MCF 10A (cell line): ENCODE measurements at regions of chr10 and their contacts with region 1.

Region 1: GRCh38 chr10:79374312-79375191 is 27.3 kb downstream of the PPIF start:
- DNase-seq: peak; percentile 80
- H3K4me3 Mint-ChIP-seq: no peak overlapping the region
- H3K27ac Mint-ChIP-seq: no peak overlapping the region
- H3K4me1 Mint-ChIP-seq: no peaks in the 10 kb centered on the region
- H3K27me3 Mint-ChIP-seq: no peaks in the 10 kb centered on the region
- CTCF ChIP-seq: peak; percentile 94

Region 2: GRCh38 chr10:79178614-79179163 is 195.9 kb before region 1 on chr10:
- CTCF ChIA-PET with region 1: no interaction called
- POLR2A ChIA-PET with region 1: no interaction called
- intact Hi-C with region 1: no loop called
- DNase-seq: no peak
- H3K4me3 Mint-ChIP-seq: no peak overlapping the region
- H3K27ac Mint-ChIP-seq: no peak overlapping the region
- H3K4me1 Mint-ChIP-seq: peaks cover 21% of the 10 kb centered on the region
- H3K27me3 Mint-ChIP-seq: no peaks in the 10 kb centered on the region
- CTCF ChIP-seq: no peak

Region 3: GRCh38 chr10:79237454-79238165 is 136.9 kb before region 1 on chr10:
- CTCF ChIA-PET with region 1: no interaction called
- POLR2A ChIA-PET with region 1: no interaction called
- intact Hi-C with region 1: no loop called
- DNase-seq: peak; percentile 73
- H3K4me3 Mint-ChIP-seq: no peak overlapping the region
- H3K27ac Mint-ChIP-seq: peak overlapping the region; percentile 82
- H3K4me1 Mint-ChIP-seq: peaks cover 58% of the 10 kb centered on the region
- H3K27me3 Mint-ChIP-seq: no peaks in the 10 kb centered on the region
- CTCF ChIP-seq: no peak

Region 4: DNA sequence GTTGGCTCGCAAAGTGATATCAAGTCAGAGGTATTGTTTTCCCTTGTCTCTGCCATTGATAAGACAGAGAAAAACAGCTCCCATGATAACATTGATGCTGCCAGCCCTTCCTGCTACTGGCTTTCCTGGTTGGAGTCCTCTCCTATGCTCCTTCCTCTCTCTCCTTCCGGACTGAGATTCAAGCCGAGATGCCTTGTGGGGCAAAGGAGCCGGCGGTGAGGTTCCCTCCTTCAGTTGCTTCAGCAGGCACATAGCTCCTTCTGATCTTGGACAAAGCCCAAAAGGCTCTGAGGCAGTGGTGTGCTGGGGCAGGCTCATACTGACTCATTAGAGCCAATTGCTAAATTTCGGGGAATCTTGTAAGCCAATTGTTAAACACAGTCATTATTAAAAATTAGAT is 79.7 kb after region 1 on chr10:
- CTCF ChIA-PET with region 1: interaction called, 14 read pairs
- POLR2A ChIA-PET with region 1: no interaction called
- intact Hi-C with region 1: no loop called
- DNase-seq: peak; percentile 96
- H3K4me3 Mint-ChIP-seq: no peak overlapping the region
- H3K27ac Mint-ChIP-seq: no peak overlapping the region
- H3K4me1 Mint-ChIP-seq: peaks cover 11% of the 10 kb centered on the region
- H3K27me3 Mint-ChIP-seq: no peaks in the 10 kb centered on the region
- CTCF ChIP-seq: no peak

Region 5: DNA sequence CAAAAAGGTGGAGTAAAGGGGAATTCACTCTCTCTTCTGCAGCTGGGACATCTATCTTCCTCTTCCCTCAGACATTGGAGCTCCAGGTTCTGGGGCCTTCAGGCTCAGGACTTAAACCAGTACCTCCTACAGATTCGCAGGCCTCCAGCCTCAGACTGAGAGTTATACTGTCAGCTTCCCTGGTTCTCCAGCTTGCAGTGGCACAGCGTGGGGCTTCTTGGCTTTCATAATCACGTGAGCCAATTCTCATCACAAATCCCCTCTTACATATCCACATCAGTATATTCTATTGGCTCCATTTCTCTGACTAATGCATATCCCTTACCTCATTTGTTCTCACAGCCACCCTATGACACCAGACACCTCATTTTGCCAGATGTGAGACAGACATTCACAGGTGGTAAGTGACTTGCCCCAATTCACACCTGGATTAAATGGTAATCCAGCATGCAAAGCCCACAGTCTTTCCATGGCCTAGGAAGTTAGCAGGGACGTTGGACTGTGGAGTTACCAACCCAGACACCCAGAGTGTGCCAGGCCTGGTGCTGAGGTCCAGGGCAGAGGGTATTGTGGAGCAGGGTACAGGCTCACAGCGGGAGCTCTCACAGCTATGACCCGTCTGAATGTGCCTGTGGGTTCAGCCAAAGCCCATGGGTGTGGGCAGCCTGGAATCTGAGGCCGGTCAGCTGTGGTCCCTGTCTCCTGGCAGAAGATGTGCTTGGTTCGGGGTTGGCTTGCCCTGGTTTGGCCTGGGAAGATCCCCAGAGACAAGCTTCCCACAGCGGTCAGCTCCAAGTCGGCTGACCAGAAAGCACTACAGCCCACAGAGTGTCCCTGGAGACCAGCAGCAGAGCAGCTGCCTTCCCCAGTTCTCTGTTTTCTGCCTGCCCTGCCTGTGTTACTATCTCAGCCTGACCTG is 89.3 kb after region 1 on chr10:
- CTCF ChIA-PET with region 1: interaction called, 38 read pairs
- POLR2A ChIA-PET with region 1: interaction called, 3 read pairs
- intact Hi-C with region 1: loop called (anchors 1 kb)
- DNase-seq: no peak
- H3K4me3 Mint-ChIP-seq: no peak overlapping the region
- H3K27ac Mint-ChIP-seq: no peak overlapping the region
- H3K4me1 Mint-ChIP-seq: no peaks in the 10 kb centered on the region
- H3K27me3 Mint-ChIP-seq: no peaks in the 10 kb centered on the region
- CTCF ChIP-seq: no peak

Region 6: DNA sequence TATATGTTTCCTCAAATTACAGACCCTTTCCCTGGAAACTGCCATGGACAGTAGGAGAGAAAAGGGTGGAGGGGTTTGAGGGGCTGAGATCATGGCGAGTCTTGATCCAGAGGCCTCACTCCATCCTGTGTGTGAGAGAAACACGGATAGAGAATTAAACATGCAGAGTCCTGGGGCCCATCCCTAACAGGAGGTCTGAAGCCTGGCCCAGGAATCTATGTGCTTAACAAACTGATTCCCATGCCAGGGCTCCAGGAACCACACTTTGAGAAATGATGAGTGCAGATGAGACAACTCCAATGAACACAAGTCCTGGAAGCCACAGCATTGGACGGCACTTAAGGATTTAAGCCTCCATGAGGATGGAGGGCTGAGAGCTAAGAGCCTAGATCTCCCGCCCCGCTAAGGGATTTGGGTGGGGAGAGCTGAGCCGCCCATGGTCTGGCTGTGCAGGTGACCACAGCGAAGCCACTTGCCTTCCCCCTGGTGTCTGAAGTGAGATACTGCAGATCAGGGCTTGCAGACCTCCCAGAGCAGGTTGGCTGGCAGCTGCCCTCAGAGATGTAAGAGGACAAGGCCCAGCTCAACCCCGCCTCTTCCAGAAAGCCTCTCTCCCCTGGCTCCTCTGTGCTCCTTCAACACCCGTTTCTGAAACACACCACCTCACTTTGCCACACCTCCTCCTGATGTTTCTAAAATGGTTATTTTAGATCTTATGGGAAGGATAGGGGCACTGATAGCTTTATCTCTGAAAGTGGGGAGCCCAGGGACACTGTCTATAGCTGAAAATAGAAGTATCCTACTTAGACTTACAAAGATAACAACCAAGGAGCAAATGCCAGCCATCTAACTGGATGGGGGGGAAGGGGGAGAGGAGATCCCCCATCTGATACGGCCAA is 113.0 kb after region 1 on chr10:
- CTCF ChIA-PET with region 1: interaction called, 11 read pairs
- POLR2A ChIA-PET with region 1: interaction called, 4 read pairs
- intact Hi-C with region 1: no loop called
- DNase-seq: peak; percentile 68
- H3K4me3 Mint-ChIP-seq: no peak overlapping the region
- H3K27ac Mint-ChIP-seq: peak overlapping the region; percentile 80
- H3K4me1 Mint-ChIP-seq: peaks cover 15% of the 10 kb centered on the region
- H3K27me3 Mint-ChIP-seq: no peaks in the 10 kb centered on the region
- CTCF ChIP-seq: peak; percentile 26

Region 7: GRCh38 chr10:79502561-79503309 is 128.2 kb after region 1 on chr10:
- CTCF ChIA-PET with region 1: interaction called, 12 read pairs
- POLR2A ChIA-PET with region 1: no interaction called
- intact Hi-C with region 1: loop called (anchors 5 kb)
- DNase-seq: peak; percentile 32
- H3K4me3 Mint-ChIP-seq: no peak overlapping the region
- H3K27ac Mint-ChIP-seq: no peak overlapping the region
- H3K4me1 Mint-ChIP-seq: peaks cover 6% of the 10 kb centered on the region
- H3K27me3 Mint-ChIP-seq: peaks cover 55% of the 10 kb centered on the region
- CTCF ChIP-seq: peak; percentile 38

Region 8: DNA sequence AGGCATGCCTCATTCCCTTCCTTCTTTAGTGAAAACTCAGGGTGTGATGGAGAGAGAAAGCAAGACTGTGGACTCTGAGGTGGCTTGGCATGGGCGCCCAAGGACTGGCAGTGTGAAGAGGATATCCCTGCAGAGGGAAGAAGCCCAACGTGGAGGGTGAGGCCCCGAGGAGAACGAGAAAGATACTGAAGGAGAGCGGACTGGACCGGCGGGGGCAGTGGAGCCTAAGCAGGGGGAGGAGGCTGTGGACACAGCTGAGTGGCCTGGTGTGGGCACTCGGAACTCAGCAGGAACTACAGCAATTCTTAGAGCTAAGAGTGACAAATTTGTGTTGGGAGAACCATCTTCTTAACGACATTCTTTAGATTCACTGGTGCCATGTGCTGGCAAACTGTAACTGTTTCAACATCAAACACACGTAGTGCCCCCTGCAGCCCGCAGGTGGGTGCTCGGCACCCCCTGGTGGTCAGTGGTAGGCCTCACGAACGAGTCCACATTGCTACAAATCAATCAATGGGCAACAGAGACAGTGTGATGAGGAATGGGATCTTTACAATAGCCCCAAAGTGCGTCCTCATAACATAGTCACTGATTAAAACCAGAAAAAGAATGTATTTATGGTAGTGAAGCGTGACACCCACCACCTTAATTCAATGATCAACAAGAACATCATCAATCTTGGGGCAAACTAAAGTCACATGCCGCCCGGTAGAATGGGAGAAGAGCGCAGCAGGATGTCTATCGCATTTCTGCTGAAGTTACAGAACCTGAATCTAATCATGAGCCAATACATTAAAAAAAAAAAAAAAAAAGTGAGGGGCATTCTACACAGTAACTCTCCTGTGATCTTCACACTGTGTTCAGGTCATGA is 234.2 kb after region 1 on chr10:
- CTCF ChIA-PET with region 1: no interaction called
- POLR2A ChIA-PET with region 1: no interaction called
- intact Hi-C with region 1: loop called (anchors 2 kb)
- DNase-seq: peak; percentile 41
- H3K4me3 Mint-ChIP-seq: no peak overlapping the region
- H3K27ac Mint-ChIP-seq: no peak overlapping the region
- H3K4me1 Mint-ChIP-seq: no peaks in the 10 kb centered on the region
- H3K27me3 Mint-ChIP-seq: peaks cover 49% of the 10 kb centered on the region
- CTCF ChIP-seq: peak; percentile 33

Region 9: DNA sequence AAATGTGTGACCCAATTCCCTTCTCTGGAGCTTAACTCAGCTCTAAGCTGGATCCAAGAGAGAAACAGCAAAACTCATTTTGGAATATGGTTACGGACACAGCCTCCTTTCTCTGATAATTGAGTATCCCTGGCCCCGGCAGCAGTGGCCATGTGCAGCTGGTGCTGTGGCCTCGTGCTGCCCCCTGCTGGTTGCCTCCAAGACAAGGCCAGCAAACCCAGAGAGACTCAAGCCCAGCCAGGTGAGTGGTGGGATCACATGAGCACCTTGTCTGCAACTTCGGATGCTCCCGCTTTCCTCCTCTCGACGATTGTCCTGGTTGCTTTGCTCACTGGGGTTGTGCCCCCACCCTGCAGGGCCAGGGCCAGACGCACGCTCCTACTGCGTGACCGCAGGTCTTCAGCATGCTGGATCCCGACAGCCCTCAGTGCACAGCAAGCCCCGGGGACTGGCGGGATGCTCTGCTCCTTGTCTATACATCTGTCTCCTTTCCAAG is 554.9 kb after region 1 on chr10:
- CTCF ChIA-PET with region 1: interaction called, 4 read pairs
- POLR2A ChIA-PET with region 1: no interaction called
- intact Hi-C with region 1: loop called (anchors 2 kb)
- DNase-seq: peak; percentile 74
- H3K4me3 Mint-ChIP-seq: no peak overlapping the region
- H3K27ac Mint-ChIP-seq: no peak overlapping the region
- H3K4me1 Mint-ChIP-seq: peaks cover 14% of the 10 kb centered on the region
- H3K27me3 Mint-ChIP-seq: peaks cover 45% of the 10 kb centered on the region
- CTCF ChIP-seq: peak; percentile 91